Ascending aorta (tissue), 2 donors: ENCODE measurements at regions of chr17 and their contacts with region 1.

Region 1: GRCh38 chr17:5438716-5439445 is at the start of gene C1QBP:
- DNase-seq: peak; percentile 29 to 95
- H3K4me3 ChIP-seq: peak within 1 kb of the TSS; percentile 87 to 91
- H3K27ac ChIP-seq: peak within 1 kb of the TSS; percentile 67 to 77
- H3K4me1 ChIP-seq: peaks cover 0 to 7% of the 10 kb centered on the region in 2 donors
- H3K27me3 ChIP-seq: no peaks in the 10 kb centered on the region
- CTCF ChIP-seq: peak; percentile 98 to 99 (median 99)
- total RNA-seq, gene C1QBP: 152 TPM

Region 2: GRCh38 chr17:5249615-5250014 is 189.3 kb before region 1 on chr17:
- intact Hi-C with region 1: loop called (anchors 5 kb)
- DNase-seq: peak in 1 of 2 donors; percentile 78
- H3K4me3 ChIP-seq: no peak overlapping the region
- H3K27ac ChIP-seq: no peak overlapping the region
- H3K4me1 ChIP-seq: no peaks in the 10 kb centered on the region
- H3K27me3 ChIP-seq: no peaks in the 10 kb centered on the region
- CTCF ChIP-seq: peak; percentile 52 to 65 (median 56)

Region 3: DNA sequence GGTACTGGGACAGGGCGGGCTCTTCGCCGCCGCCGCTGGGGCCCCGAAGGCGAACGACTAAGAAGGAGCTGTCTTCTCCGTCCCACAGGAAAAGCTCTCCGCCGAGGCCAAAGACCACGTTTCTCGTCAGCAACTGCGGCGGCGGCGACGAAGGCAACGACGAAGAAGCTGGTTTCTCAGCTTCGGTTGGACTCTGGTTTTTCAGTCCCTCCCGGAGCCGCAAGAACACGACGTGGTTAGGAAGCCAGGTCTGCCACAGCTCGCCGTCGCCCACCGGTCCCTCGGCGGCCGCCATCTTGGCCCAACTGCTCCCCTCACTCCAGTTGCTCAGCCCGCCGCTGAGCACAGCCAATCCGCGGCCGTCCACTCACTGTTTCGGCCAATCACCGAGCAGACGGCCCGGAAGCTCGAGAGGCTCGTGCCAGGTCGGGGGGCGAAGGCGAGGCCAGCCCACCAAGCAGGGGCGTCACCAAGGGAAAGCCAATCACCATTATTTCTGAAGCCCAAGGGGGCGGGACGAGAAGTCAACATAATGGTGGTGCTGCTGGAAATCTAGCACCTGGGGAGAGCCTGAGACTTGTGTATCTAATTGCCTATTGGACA is 19.4 kb before region 1 on chr17 and contains the start of gene NUP88:
- intact Hi-C with region 1: loop called (anchors 1 kb)
- DNase-seq: peak; percentile 91 to 98
- H3K4me3 ChIP-seq: peak within 1 kb of the TSS; percentile 68 to 84
- H3K27ac ChIP-seq: peak within 1 kb of the TSS; percentile 78 to 82
- H3K4me1 ChIP-seq: peaks cover 4 to 20% of the 10 kb centered on the region in 2 donors
- H3K27me3 ChIP-seq: no peaks in the 10 kb centered on the region
- CTCF ChIP-seq: no peak
- total RNA-seq, gene NUP88: 102 TPM

Region 4: GRCh38 chr17:5468075-5468473 is 29.2 kb after region 1 on chr17:
- intact Hi-C with region 1: loop called (anchors 2 kb)
- DNase-seq: no peak
- H3K4me3 ChIP-seq: peak overlapping the region; percentile 59 to 85
- H3K27ac ChIP-seq: peak overlapping the region in 1 of 2 donors; percentile 71
- H3K4me1 ChIP-seq: peaks cover 2 to 9% of the 10 kb centered on the region in 2 donors
- H3K27me3 ChIP-seq: no peaks in the 10 kb centered on the region
- CTCF ChIP-seq: no peak